CD4-positive, alpha-beta memory T cell (primary cell): ENCODE measurements at regions of chr6 and their contacts with region 1.

Region 1: GRCh38 chr6:53410508-53411258 is 61.9 kb upstream of the ELOVL5 start:
- DNase-seq: peak; percentile 57 to 71 (median 67)
- H3K4me3 ChIP-seq: no peak overlapping the region
- H3K4me3 Mint-ChIP-seq: no peak overlapping the region
- H3K27ac ChIP-seq: no peak overlapping the region
- H3K27ac Mint-ChIP-seq: peak overlapping the region in 1 of 7 donors; percentile 6
- H3K4me1 ChIP-seq: no peaks in the 10 kb centered on the region
- H3K4me1 Mint-ChIP-seq: peaks cover 0 to 5% (median 2%) of the 10 kb centered on the region in 4 donors
- H3K27me3 ChIP-seq: no peaks in the 10 kb centered on the region
- H3K27me3 Mint-ChIP-seq: peaks cover 3 to 4% of the 10 kb centered on the region in 2 donors

Region 2: DNA sequence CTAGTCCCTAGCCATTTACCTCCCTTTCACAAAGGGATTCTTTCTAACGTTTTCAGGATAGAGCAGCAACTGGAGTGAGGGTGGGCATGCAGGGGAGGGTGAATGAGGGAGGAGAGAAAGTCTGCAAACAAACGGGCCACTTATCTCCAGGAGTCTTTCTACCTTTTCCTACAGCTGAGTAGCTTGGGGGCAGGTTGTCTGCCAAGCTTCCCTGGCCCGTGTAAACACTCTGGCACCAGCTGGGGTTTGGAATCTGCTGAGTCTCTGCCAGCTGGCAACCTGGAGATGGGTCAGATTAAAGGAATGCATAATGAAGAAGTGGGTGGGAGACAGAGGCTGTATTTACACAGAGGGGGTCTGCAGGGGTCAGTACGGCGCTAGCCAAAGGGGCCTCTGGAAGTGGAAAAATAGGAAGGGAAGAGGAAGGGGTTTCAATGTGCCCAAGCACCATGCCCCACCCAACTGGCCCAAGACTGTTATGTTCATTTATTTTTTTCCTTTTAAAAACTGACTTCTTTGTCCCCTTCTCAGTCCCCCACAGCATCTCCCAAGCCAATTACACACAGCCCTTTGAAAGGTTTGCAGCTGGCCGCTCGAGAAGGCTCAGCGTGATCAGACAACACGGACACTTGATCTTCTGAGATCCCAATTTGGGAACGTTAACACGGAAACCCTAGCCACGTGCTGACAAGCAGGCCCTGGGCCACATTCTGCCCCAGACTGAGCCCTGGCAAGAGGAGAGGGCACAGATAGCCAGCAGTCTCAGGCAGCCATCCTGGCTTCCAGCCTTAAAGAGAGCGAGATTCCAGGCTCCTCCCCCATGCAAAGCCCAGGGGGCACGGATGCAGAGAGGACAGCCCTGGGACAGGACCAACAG is 859.0 kb before region 1 on chr6:
- CTCF ChIA-PET with region 1: no interaction called
- POLR2A ChIA-PET with region 1: no interaction called
- intact Hi-C with region 1: no loop called
- DNase-seq: no peak
- H3K4me3 ChIP-seq: no peak overlapping the region
- H3K4me3 Mint-ChIP-seq: no peak overlapping the region
- H3K27ac ChIP-seq: no peak overlapping the region
- H3K27ac Mint-ChIP-seq: peak overlapping the region in 3 of 7 donors; percentile 21 to 57 (median 30)
- H3K4me1 ChIP-seq: no peaks in the 10 kb centered on the region
- H3K4me1 Mint-ChIP-seq: peaks cover 14 to 48% (median 39%) of the 10 kb centered on the region in 4 donors
- H3K27me3 ChIP-seq: no peaks in the 10 kb centered on the region
- H3K27me3 Mint-ChIP-seq: no peaks in the 10 kb centered on the region

Region 3: DNA sequence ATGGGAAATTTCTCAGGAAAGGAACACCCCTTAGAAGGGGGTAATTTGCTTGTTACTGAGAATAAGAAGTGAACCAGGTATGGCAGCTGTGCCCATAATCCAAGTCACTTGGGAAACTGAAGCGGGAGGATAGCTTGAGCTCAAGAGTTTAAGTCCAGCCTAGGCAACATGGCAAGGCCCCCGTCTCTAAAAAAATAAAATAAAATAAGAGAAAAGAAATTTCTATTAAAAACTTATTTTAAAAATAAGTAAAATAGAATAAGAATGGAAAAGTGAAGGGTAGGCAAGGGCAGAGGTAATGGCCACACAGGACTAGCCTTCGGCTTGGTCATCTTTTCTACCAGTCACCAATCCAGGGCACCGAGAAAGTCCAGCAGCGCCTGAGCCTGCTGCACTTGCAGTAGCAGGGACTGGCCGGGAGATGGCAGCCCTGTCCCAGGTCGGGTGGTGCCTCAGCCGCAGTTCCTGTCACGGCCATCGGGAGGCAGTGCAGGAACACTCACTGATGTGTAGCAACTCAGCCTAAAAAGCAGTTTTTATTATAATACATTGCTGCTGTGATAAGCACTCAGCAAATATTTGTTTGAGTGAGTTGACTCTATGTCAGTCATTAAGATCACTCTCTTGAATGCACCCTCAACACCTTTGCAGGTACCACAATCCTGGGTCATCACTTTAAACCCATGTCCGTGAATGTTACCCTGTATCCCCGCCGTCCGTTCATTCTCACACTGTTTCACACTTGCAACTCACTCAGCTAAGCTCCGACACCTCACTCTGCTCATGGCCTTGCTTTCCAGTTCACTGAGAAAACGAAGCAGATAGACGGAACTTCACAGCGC is 238.9 kb before region 1 on chr6:
- CTCF ChIA-PET with region 1: interaction called, 202 read pairs
- POLR2A ChIA-PET with region 1: interaction called, 5 read pairs
- intact Hi-C with region 1: loop called (anchors 1 kb)
- DNase-seq: peak; percentile 83 to 90 (median 85)
- H3K4me3 ChIP-seq: no peak overlapping the region
- H3K4me3 Mint-ChIP-seq: no peak overlapping the region
- H3K27ac ChIP-seq: no peak overlapping the region
- H3K27ac Mint-ChIP-seq: no peak overlapping the region
- H3K4me1 ChIP-seq: no peaks in the 10 kb centered on the region
- H3K4me1 Mint-ChIP-seq: no peaks in the 10 kb centered on the region
- H3K27me3 ChIP-seq: no peaks in the 10 kb centered on the region
- H3K27me3 Mint-ChIP-seq: no peaks in the 10 kb centered on the region

Region 4: DNA sequence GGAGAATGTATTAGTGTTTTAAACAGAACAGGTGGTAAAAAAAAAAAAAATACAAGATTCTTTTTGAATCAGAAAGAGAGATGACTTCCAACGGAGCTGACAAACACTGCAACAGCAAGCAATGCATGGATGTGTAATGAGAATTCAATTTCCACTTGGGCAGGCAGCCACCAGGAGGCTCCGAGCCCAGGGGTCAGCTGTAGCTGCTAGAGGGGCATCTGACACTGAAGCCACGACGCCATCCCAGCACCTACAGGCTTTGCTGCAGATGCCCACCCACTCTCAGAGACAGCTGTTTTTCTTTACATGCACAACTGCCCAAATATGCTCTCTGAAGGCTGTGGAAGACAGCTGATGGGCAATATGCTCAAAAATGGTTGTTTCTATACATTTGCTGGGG is 137.3 kb before region 1 on chr6:
- CTCF ChIA-PET with region 1: interaction called, 15 read pairs
- POLR2A ChIA-PET with region 1: no interaction called
- intact Hi-C with region 1: no loop called
- DNase-seq: no peak
- H3K4me3 ChIP-seq: no peak overlapping the region
- H3K4me3 Mint-ChIP-seq: no peak overlapping the region
- H3K27ac ChIP-seq: no peak overlapping the region
- H3K27ac Mint-ChIP-seq: peak overlapping the region in 5 of 7 donors; percentile 5 to 77 (median 37)
- H3K4me1 ChIP-seq: no peaks in the 10 kb centered on the region
- H3K4me1 Mint-ChIP-seq: peaks cover 4 to 15% (median 7%) of the 10 kb centered on the region in 4 donors
- H3K27me3 ChIP-seq: no peaks in the 10 kb centered on the region
- H3K27me3 Mint-ChIP-seq: no peaks in the 10 kb centered on the region

Region 5: DNA sequence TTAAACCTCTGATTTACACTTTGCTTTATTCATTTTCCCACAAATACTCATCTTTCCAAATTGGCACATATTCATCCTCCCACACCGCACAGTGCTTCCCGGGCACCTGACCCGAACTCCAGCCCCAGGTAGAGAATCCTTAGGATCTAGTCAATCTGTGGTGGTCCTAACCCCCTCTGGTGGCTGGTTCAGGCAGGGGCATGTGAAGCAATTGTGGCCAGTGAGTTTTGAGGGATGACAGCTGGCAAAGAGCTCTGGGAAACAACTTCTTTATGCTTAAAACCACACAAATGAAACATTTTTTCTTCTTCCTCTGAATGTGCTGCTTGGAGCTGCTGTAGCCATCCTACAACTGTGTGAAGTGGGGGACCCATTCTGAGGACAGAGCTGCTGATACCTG is 116.6 kb before region 1 on chr6:
- CTCF ChIA-PET with region 1: interaction called, 28 read pairs
- POLR2A ChIA-PET with region 1: no interaction called
- intact Hi-C with region 1: loop called (anchors 1 kb)
- DNase-seq: no peak
- H3K4me3 ChIP-seq: no peak overlapping the region
- H3K4me3 Mint-ChIP-seq: peak overlapping the region in 2 of 8 donors; percentile 6 to 34
- H3K27ac ChIP-seq: peak overlapping the region; percentile 27
- H3K27ac Mint-ChIP-seq: peak overlapping the region; percentile 53 to 94 (median 83)
- H3K4me1 ChIP-seq: peaks cover 97% of the 10 kb centered on the region
- H3K4me1 Mint-ChIP-seq: peaks cover 69 to 97% (median 83%) of the 10 kb centered on the region in 4 donors
- H3K27me3 ChIP-seq: no peaks in the 10 kb centered on the region
- H3K27me3 Mint-ChIP-seq: no peaks in the 10 kb centered on the region

Region 6: DNA sequence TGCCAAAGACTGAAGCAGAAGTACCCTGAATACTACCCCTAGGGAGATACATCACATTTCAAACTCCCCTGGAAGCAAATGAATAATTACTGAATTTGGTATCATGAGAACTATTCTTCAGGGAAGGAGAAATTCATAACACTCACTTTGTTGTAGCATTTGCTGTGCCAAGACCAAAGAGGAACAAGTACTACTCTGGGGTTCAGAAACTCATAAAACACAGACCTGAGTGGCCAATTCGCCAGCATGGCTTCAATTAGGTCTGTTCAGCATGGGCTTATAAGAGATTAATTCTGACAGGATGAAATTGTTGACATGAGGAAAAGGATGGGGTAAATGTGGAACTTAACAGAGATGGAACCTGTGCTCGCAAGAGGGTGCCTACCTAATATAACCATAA is 68.5 kb before region 1 on chr6:
- CTCF ChIA-PET with region 1: interaction called, 15 read pairs
- POLR2A ChIA-PET with region 1: interaction called, 19 read pairs
- intact Hi-C with region 1: loop called (anchors 1 kb)
- DNase-seq: no peak
- H3K4me3 ChIP-seq: no peak overlapping the region
- H3K4me3 Mint-ChIP-seq: peak overlapping the region in 6 of 8 donors; percentile 41 to 63 (median 54)
- H3K27ac ChIP-seq: no peak overlapping the region
- H3K27ac Mint-ChIP-seq: peak overlapping the region; percentile 37 to 98 (median 78)
- H3K4me1 ChIP-seq: peaks cover 95% of the 10 kb centered on the region
- H3K4me1 Mint-ChIP-seq: peaks cover 87 to 95% (median 91%) of the 10 kb centered on the region in 4 donors
- H3K27me3 ChIP-seq: no peaks in the 10 kb centered on the region
- H3K27me3 Mint-ChIP-seq: no peaks in the 10 kb centered on the region

Region 7: GRCh38 chr6:53359072-53359842 is 51.4 kb before region 1 on chr6:
- CTCF ChIA-PET with region 1: interaction called, 16 read pairs
- POLR2A ChIA-PET with region 1: no interaction called
- intact Hi-C with region 1: no loop called
- DNase-seq: peak; percentile 85 to 93 (median 92)
- H3K4me3 ChIP-seq: peak overlapping the region; percentile 50 to 74
- H3K4me3 Mint-ChIP-seq: peak overlapping the region; percentile 81 to 96 (median 91)
- H3K27ac ChIP-seq: peak overlapping the region; percentile 99
- H3K27ac Mint-ChIP-seq: peak overlapping the region; percentile 87 to 100 (median 98)
- H3K4me1 ChIP-seq: peaks cover 53% of the 10 kb centered on the region
- H3K4me1 Mint-ChIP-seq: peaks cover 35 to 61% (median 42%) of the 10 kb centered on the region in 4 donors
- H3K27me3 ChIP-seq: no peaks in the 10 kb centered on the region
- H3K27me3 Mint-ChIP-seq: no peaks in the 10 kb centered on the region

Region 8: GRCh38 chr6:53437557-53438202 is 27.0 kb after region 1 on chr6:
- CTCF ChIA-PET with region 1: interaction called, 9 read pairs
- POLR2A ChIA-PET with region 1: no interaction called
- intact Hi-C with region 1: loop called (anchors 1 kb)
- DNase-seq: peak in 4 of 5 donors; percentile 20 to 38 (median 22)
- H3K4me3 ChIP-seq: no peak overlapping the region
- H3K4me3 Mint-ChIP-seq: no peak overlapping the region
- H3K27ac ChIP-seq: no peak overlapping the region
- H3K27ac Mint-ChIP-seq: no peak overlapping the region
- H3K4me1 ChIP-seq: no peaks in the 10 kb centered on the region
- H3K4me1 Mint-ChIP-seq: peaks cover 0 to 2% (median 0%) of the 10 kb centered on the region in 4 donors
- H3K27me3 ChIP-seq: no peaks in the 10 kb centered on the region
- H3K27me3 Mint-ChIP-seq: peaks cover 0 to 12% of the 10 kb centered on the region in 2 donors

Region 9: DNA sequence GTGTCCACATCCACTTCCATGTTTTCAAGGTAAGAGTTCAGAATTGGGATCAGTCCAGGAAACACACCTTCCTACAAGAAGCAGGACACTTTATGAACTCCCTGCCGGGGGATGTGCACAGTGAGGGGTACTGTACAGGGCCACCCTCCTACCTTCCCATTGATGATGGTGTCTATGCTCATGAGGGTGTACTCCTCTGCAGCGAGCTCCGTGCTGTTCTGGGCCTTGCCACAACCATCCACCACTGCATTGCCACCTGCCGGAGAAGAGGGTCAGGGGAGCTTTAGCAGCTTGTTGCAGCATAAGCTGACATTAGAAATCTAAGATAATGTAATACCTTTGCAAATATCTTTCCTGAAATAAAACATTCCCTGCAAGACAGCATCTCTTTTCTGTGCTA is 89.4 kb after region 1 on chr6:
- CTCF ChIA-PET with region 1: no interaction called
- POLR2A ChIA-PET with region 1: no interaction called
- intact Hi-C with region 1: no loop called
- DNase-seq: no peak
- H3K4me3 ChIP-seq: no peak overlapping the region
- H3K4me3 Mint-ChIP-seq: no peak overlapping the region
- H3K27ac ChIP-seq: no peak overlapping the region
- H3K27ac Mint-ChIP-seq: no peak overlapping the region
- H3K4me1 ChIP-seq: no peaks in the 10 kb centered on the region
- H3K4me1 Mint-ChIP-seq: no peaks in the 10 kb centered on the region
- H3K27me3 ChIP-seq: no peaks in the 10 kb centered on the region
- H3K27me3 Mint-ChIP-seq: no peaks in the 10 kb centered on the region